ENCODE measurements at regions of chr9 and their contacts with region 1.

Region 1: GRCh38 chr9:109469646-109470358 is 28.3 kb downstream of the PTPN3 start:
- DNase-seq: peak; percentile 47
- H3K4me3 ChIP-seq: no peak overlapping the region
- H3K27ac ChIP-seq: no peak overlapping the region
- H3K27me3 ChIP-seq: no peaks in the 10 kb centered on the region
- CTCF ChIP-seq: peak; percentile 96

Region 2: DNA sequence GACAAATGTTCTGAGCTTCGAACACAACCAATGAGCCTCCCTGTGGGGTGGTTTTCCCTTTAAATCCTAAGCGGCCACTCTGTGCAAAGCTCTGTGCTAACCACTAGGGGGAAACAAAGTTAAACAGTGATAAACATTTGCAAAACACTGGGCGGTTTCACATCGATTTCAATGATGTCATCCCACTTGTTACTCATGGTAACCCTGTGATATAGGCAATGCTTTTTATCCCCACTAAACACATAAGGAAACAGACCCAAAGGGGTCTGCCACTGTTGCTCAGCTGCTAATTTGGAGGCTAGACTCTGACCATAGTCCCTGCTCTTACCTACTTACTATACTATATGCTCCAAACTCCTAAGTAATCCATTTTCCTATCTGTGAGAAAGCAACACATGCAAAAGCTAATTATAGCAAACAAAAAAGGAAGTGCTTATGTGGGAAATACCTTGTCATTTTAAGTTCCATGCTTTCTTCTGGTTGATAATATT is 29.0 kb before region 1 on chr9:
- CTCF ChIA-PET with region 1: interaction called, 133 read pairs
- POLR2A ChIA-PET with region 1: no interaction called
- DNase-seq: peak; percentile 70
- H3K4me3 ChIP-seq: no peak overlapping the region
- H3K27ac ChIP-seq: no peak overlapping the region
- H3K27me3 ChIP-seq: no peaks in the 10 kb centered on the region
- CTCF ChIP-seq: peak; percentile 84

Region 3: GRCh38 chr9:109453210-109453842 is 16.5 kb before region 1 on chr9:
- CTCF ChIA-PET with region 1: interaction called, 26 read pairs
- POLR2A ChIA-PET with region 1: no interaction called
- DNase-seq: peak; percentile 27
- H3K4me3 ChIP-seq: no peak overlapping the region
- H3K27ac ChIP-seq: peak overlapping the region; percentile 13
- H3K27me3 ChIP-seq: no peaks in the 10 kb centered on the region
- CTCF ChIP-seq: no peak

Region 4: DNA sequence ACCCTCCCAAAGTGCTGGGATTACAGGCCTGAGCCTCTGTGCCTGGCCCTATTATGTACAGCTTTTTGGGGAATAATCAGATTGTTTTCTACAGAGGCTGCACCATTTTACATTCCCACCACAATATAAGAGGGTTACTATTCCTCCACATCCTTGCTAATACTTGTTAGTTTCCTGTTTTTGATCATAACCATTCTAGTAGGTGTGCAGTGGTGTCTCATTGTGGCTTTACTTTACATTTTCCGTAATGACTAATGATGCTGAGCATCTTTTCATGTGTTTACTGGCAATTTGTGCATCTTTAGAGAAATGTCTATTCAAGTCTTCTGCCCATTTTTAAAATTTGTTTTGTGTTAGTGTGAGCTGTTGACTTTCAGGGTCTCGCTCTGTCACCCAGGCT is 10.0 kb after region 1 on chr9:
- CTCF ChIA-PET with region 1: interaction called, 11 read pairs
- POLR2A ChIA-PET with region 1: no interaction called
- DNase-seq: no peak
- H3K4me3 ChIP-seq: no peak overlapping the region
- H3K27ac ChIP-seq: no peak overlapping the region
- H3K27me3 ChIP-seq: no peaks in the 10 kb centered on the region
- CTCF ChIP-seq: no peak

Region 5: DNA sequence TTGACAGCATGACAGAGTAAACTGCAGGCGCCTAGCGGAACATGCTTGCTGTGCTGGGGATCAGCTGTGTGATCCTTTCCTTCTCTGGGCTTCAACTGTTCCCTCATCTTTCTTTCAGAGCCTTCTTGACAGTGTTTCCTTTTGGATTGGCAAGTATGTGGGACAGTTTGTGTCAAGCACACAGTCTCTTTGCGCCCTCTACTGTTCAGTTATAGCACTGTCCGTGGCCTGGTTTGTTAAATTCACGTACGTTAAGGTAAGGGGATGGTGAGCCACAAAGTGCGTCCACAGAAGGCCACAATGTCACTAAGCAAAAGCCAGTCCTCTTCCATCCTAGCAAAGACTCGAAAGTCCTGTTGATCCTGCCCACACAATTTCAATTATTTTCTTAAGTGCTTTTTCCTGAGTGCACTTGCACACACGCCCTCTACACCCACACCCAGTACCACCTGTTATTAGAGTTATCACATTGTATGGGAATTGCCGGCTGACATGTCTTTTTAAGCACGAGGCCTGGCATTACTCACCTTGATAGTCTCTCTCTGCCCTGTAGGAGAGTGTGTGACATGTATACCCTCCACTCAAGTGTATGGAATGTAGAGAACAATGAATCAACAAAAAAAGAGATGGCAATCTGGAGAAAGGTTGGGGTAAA is 50.8 kb after region 1 on chr9:
- CTCF ChIA-PET with region 1: interaction called, 10 read pairs
- POLR2A ChIA-PET with region 1: no interaction called
- DNase-seq: peak; percentile 29
- H3K4me3 ChIP-seq: no peak overlapping the region
- H3K27ac ChIP-seq: no peak overlapping the region
- H3K27me3 ChIP-seq: peaks cover 9% of the 10 kb centered on the region
- CTCF ChIP-seq: peak; percentile 95